ENCODE measurements at regions of chr20 and their contacts with region 1.

Region 1: GRCh38 chr20:22027423-22027822 is 322.0 kb downstream of the PAX1 start:
- DNase-seq: no peak
- H3K4me3 ChIP-seq: no peak overlapping the region
- H3K27ac ChIP-seq: no peak overlapping the region
- H3K4me1 ChIP-seq: no peaks in the 10 kb centered on the region
- H3K27me3 ChIP-seq: no peaks in the 10 kb centered on the region
- CTCF ChIP-seq: no peak

Region 2: DNA sequence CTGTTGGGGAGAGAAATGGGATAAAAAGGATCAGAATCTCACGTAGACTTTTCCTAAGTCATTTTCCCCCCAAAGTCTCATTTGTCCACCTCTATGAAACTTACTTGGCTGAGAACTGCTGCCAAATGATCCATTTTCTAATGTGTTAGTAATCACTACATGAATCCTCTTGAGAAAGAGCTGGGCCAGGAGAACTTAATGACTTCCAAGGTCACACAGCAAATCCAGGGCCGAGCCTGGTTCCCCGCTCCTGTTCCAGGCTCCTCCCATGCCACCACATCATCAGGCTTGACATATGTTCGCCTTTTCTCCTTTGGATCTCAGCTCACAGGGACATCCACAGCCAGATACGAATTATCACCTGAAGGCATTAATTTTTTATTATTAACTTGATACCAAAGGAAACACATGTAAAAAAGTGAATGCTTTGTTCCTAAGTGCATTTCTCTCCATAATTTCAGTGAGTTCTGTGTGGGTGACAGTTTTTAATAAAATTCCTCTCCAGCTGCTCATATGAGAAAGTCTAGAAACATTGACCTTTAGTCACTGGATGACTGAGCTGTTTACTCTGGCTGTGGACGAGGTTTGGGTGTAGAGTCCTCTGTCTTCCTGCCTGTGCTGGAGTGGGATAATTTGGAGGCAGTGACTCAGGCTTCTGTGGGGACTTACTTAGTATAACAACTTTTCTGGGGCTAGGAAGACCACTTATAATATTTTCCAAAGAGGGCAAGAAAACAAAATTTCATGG is 45.7 kb before region 1 on chr20:
- CTCF ChIA-PET with region 1: no interaction called
- dilution Hi-C with region 1: loop called (anchors 5 kb)
- in situ Hi-C with region 1: no loop called
- intact Hi-C with region 1: no loop called
- DNase-seq: no peak
- H3K4me3 ChIP-seq: no peak overlapping the region
- H3K27ac ChIP-seq: no peak overlapping the region
- H3K4me1 ChIP-seq: no peaks in the 10 kb centered on the region
- H3K27me3 ChIP-seq: no peaks in the 10 kb centered on the region
- CTCF ChIP-seq: no peak

Region 3: GRCh38 chr20:22052025-22052650 is 24.7 kb after region 1 on chr20:
- CTCF ChIA-PET with region 1: no interaction called
- dilution Hi-C with region 1: no loop called
- in situ Hi-C with region 1: no loop called
- intact Hi-C with region 1: no loop called
- DNase-seq: no peak
- H3K4me3 ChIP-seq: no peak overlapping the region
- H3K27ac ChIP-seq: no peak overlapping the region
- H3K4me1 ChIP-seq: no peaks in the 10 kb centered on the region
- H3K27me3 ChIP-seq: no peaks in the 10 kb centered on the region
- CTCF ChIP-seq: no peak

Region 4: DNA sequence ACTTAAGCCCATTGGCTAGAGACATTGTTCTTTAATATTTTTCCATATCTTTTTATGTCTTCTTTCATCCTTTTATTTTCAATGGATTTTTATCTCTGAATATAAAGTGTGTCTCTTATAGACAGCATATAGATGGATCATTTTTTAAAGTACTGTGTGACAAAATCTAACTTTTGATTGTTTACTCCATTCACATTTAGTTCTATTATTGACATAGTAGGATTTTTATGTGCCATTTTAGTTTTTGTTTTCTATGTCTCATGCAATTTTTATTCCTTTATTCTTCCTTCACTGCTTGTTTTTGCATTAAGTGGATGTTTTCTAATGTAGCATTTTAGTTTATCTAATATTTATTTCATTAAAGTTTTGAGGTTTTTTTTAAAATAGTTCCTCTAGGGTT is 60.6 kb after region 1 on chr20:
- CTCF ChIA-PET with region 1: no interaction called
- dilution Hi-C with region 1: no loop called
- in situ Hi-C with region 1: no loop called
- intact Hi-C with region 1: no loop called
- DNase-seq: no peak
- H3K4me3 ChIP-seq: no peak overlapping the region
- H3K27ac ChIP-seq: no peak overlapping the region
- H3K4me1 ChIP-seq: no peaks in the 10 kb centered on the region
- H3K27me3 ChIP-seq: no peaks in the 10 kb centered on the region
- CTCF ChIP-seq: no peak

Measured in mammary epithelial cell (primary cell).